Posterior vena cava (tissue), 2 donors: ENCODE measurements at regions of chr4 and their contacts with region 1.

Region 1: GRCh38 chr4:42543762-42544161 is 113.1 kb downstream of the ATP8A1 start:
- DNase-seq: no peak

Region 2: DNA sequence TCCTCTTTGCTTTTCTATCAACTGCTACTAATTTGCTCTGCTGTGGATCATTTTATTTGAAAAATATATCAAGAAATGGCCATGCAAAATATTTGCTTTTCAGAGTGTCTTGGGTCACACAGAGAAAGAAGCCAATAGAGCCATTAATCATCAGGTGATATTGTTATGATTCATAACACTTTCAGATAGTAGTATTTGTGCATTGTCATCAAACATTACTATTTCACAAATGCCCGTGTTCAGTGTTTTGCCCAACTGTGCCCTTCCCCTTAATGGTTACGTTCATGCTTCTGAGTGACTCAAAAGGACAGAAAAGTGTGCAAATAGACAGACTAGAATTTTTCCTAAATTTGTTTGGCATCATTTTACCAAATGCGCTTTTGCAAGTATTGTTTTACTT is 841.8 kb before region 1 on chr4:
- intact Hi-C with region 1: loop called in 1 of 2 experiments (anchors 5 kb)
- DNase-seq: no peak

Region 3: GRCh38 chr4:41934815-41935651 is 608.7 kb before region 1 on chr4 and contains the start of gene TMEM33:
- intact Hi-C with region 1: no loop called
- DNase-seq: peak; percentile 94
- total RNA-seq, gene TMEM33: 34.7 to 35.7 TPM